HCT116 (cell line): ENCODE measurements at regions of chr15 and their contacts with region 1.

Region 1: DNA sequence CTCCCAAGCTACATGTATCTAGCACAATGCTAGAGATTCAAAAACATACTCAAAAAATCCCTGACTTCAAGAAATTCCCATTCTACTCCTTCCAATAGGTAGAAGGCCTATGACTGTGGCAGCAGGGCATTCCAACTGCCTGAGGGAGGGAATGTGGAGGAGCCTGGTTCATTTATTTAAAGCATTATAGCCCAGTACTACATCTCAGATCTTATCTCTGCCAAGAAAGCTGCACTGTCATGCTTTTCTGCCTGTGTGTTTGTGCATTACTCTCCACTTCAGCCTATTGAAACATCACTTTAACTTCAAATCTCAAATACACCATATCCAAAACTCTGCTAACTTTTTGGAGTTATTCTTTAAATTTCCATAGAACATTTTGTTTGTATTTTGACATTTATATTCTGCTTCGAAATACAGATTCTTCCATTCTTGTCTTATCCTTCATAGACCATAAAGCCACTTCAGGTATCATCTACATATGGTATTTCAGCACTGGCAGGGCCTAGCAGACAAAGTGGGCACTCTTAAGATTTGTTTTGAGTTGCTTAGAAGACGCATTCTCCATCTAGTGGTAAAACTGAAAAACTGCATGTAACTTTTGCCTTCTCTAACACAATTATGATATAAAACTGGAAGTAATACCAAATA is 59.1 kb upstream of the NEDD4 start:
- DNase-seq: peak; percentile 57
- ATAC-seq: peak; percentile 86
- H3K4me3 ChIP-seq: no peak overlapping the region
- H3K27ac ChIP-seq: no peak overlapping the region
- H3K4me1 ChIP-seq: no peaks in the 10 kb centered on the region
- H3K27me3 ChIP-seq: no peaks in the 10 kb centered on the region
- CTCF ChIP-seq: peak; percentile 57 to 78 (median 63); a peak in 5 of 6 replicates
- POLR2A ChIP-seq: no peak
- RAD21 ChIP-seq: peak; percentile 74

Region 2: DNA sequence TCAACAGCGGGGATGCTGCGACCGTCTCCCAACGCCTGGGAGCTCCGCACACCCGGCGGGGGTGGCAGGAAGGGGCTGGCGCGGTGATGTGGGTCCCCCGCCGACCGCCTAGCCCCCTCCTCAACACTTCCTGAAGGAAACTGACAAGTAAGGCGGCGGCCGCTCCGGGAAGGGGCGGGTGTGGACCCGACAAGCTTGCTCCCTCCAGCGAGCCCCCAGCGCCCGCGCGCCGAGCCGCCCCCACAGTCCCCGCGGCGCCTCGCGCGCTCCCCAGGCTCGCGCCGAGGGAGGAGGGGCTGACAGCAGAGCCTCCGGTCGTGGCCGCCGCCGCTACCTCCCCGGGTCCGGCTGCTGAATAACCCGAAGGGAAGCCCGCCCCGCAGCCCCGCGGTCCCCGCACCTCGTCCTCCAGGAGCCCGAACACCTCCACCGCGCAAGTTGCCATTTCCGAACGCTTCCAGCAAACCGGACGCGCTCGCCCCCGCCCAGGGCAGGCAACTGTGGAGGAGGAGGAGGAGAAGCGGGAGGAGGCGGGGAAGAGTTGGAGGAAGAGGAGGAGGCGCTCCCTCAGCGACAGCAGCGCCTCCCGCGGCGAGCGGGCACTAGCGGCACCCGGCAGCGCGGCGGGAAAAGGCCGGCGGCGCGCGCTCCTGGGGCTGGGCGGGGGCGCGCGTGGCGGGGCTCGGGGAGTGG is 59.3 kb before region 1 on chr15 and contains the start of gene NEDD4:
- CTCF ChIA-PET with region 1: no interaction called
- POLR2A ChIA-PET with region 1: no interaction called
- RAD21 ChIA-PET with region 1: no interaction called
- intact Hi-C with region 1: loop called (anchors 2 kb)
- DNase-seq: peak; percentile 47
- ATAC-seq: peak; percentile 95
- H3K4me3 ChIP-seq: peak within 1 kb of the TSS; percentile 66 to 77
- H3K27ac ChIP-seq: peak within 1 kb of the TSS; percentile 68
- H3K4me1 ChIP-seq: peaks cover 8 to 17% of the 10 kb centered on the region in 2 experiments
- H3K27me3 ChIP-seq: no peaks in the 10 kb centered on the region
- CTCF ChIP-seq: peak; percentile 8 to 52 (median 40); a peak in 4 of 6 replicates
- POLR2A ChIP-seq: peak; percentile 60
- RAD21 ChIP-seq: no peak
- total RNA-seq, gene NEDD4: 13.7 TPM